Psoas muscle (tissue), 8 donors: ENCODE measurements at regions of chr6 and their contacts with region 1.

Region 1: GRCh38 chr6:24283043-24283985 is 74.5 kb downstream of the DCDC2 start:
- DNase-seq: peak; percentile 46 to 57
- ATAC-seq: peak; percentile 80 to 95 (median 88)
- H3K4me3 ChIP-seq: peak overlapping the region; percentile 31
- H3K27ac ChIP-seq: no peak overlapping the region
- H3K4me1 ChIP-seq: no peaks in the 10 kb centered on the region
- H3K27me3 ChIP-seq: no peaks in the 10 kb centered on the region
- CTCF ChIP-seq: peak; percentile 63

Region 2: GRCh38 chr6:24313251-24314141 is 30.2 kb after region 1 on chr6:
- intact Hi-C with region 1: no loop called
- DNase-seq: no peak
- ATAC-seq: no peak
- H3K4me3 ChIP-seq: no peak overlapping the region
- H3K27ac ChIP-seq: no peak overlapping the region
- H3K4me1 ChIP-seq: no peaks in the 10 kb centered on the region
- H3K27me3 ChIP-seq: no peaks in the 10 kb centered on the region
- CTCF ChIP-seq: no peak

Region 3: DNA sequence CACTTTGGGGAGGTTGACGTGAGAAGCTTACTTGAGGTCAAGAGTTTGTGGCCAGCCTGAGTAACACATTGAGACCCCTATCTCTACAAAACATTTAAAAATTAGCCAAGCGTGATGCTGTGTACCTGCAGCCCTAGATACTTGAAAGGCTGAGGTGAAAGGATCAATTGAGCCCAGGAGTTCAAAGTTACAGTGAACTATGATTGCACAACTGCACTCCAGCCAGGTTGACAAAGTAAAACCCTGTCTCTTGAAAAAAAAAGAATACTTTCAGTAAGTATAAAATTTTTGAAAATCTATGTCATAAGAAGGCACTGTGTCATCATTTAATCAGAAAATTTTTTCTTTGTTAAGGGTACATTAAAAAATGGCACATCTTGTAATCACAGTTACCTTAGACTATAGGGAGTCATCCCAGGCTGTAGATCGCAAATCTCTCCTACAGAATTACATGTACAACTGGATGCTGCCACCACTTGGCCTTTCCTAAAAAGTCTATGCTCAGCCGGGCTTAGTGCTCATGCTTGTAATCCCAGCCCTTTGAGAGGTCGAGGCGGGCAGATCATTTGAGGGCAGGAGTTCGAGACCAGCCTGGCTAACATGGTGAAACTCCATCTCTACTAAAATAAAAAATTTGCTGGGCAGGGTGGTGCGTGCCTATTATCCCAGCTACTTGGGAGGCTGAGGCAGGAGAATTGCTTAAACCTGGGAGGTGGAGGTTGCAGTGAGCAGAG is 102.4 kb after region 1 on chr6:
- intact Hi-C with region 1: loop called in 1 of 2 experiments (anchors 5 kb)
- DNase-seq: no peak
- ATAC-seq: no peak
- H3K4me3 ChIP-seq: no peak overlapping the region
- H3K27ac ChIP-seq: no peak overlapping the region
- H3K4me1 ChIP-seq: no peaks in the 10 kb centered on the region
- H3K27me3 ChIP-seq: no peaks in the 10 kb centered on the region
- CTCF ChIP-seq: no peak

Region 4: GRCh38 chr6:24391756-24392405 is 108.6 kb after region 1 on chr6:
- intact Hi-C with region 1: loop called (anchors 2 to 5 kb)
- DNase-seq: no peak
- ATAC-seq: no peak
- H3K4me3 ChIP-seq: no peak overlapping the region
- H3K27ac ChIP-seq: no peak overlapping the region
- H3K4me1 ChIP-seq: peaks cover 10% of the 10 kb centered on the region
- H3K27me3 ChIP-seq: no peaks in the 10 kb centered on the region
- CTCF ChIP-seq: no peak

Region 5: GRCh38 chr6:24520929-24521546 is 237.7 kb after region 1 on chr6:
- intact Hi-C with region 1: loop called (anchors 5 to 10 kb)
- DNase-seq: peak; percentile 33 to 74
- ATAC-seq: peak; percentile 71 to 98 (median 88)
- H3K4me3 ChIP-seq: no peak overlapping the region
- H3K27ac ChIP-seq: no peak overlapping the region
- H3K4me1 ChIP-seq: no peaks in the 10 kb centered on the region
- H3K27me3 ChIP-seq: no peaks in the 10 kb centered on the region
- CTCF ChIP-seq: peak; percentile 64